CD8-positive, alpha-beta T cell (primary cell): ENCODE measurements at regions of chr19 and their contacts with region 1.

Region 1: DNA sequence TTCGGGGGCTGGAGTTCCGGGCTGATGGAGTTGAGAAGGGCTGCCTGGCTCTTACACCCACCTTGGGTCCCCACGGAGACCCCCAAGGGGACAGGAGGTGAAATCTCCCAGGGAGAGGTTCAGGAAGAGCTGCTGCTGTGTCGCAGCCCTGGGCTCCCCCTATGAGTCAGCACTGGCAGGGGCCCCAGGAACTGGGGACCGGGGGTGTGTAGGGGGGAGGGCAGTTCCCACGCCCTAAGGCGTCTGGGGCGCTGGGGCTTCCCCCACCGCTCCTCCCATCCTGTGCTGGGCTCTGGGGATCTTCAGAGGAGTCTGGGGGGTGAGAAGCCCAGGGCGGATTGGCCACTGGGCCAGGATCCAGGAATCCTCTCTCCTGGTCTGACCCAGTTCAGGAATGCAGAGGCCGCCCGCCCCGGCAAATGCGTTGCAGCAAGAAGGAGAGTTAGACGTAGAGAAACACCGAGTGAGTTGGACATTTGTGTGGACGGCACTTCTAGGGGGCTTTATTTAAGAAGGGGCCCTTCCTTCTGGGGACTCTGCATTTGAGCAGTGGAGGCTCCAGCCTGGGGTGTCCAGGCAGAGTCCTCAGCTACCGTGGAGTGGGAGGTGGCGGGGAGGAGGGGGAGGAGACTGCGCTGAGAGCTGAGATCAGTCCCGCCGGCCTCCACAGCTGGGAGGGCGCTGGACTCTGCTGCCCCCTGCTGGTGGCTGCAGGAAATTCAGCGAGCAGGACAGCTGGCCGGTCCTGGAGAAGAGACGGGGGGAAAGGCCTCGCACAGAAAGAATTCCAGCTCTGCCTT is 15.0 kb upstream of the NANOS3 start:
- DNase-seq: peak; percentile 81 to 95 (median 89)
- ATAC-seq: peak; percentile 84
- H3K4me3 ChIP-seq: peak overlapping the region; percentile 74 to 75
- H3K4me3 Mint-ChIP-seq: peak overlapping the region; percentile 92
- H3K27ac ChIP-seq: peak overlapping the region; percentile 71 to 98
- H3K27ac Mint-ChIP-seq: peak overlapping the region; percentile 96
- H3K4me1 ChIP-seq: peaks cover 31% of the 10 kb centered on the region
- H3K4me1 Mint-ChIP-seq: peaks cover 30% of the 10 kb centered on the region
- H3K27me3 ChIP-seq: peaks cover 7 to 21% of the 10 kb centered on the region in 2 experiments
- H3K27me3 Mint-ChIP-seq: peaks cover 16% of the 10 kb centered on the region
- CTCF ChIP-seq: peak; percentile 99

Region 2: DNA sequence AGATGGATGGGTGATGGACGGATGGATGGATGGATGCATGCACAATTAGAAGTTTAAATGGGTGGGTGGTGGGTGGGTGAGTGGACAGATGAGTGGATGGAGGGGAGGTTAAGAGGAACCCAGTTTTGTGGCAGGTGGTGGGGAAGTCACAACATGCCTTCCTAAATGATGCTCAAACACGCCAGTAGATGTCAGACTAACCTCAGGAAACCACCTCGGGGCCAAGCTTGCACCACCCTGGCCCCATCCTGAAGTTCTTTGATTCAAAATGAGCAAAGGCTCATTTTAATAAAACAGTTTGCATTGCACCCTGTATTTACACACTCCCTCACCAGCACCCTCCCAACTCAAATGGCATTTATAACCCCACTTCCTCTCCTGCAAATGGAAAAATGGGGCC is 264.3 kb before region 1 on chr19:
- CTCF ChIA-PET with region 1: interaction called, 6 read pairs
- POLR2A ChIA-PET with region 1: no interaction called
- intact Hi-C with region 1: loop called (anchors 1 kb)
- DNase-seq: peak in 8 of 9 experiments; percentile 9 to 75 (median 34)
- ATAC-seq: peak; percentile 76
- H3K4me3 ChIP-seq: no peak overlapping the region
- H3K4me3 Mint-ChIP-seq: no peak overlapping the region
- H3K27ac ChIP-seq: no peak overlapping the region
- H3K27ac Mint-ChIP-seq: no peak overlapping the region
- H3K4me1 ChIP-seq: no peaks in the 10 kb centered on the region
- H3K4me1 Mint-ChIP-seq: no peaks in the 10 kb centered on the region
- H3K27me3 ChIP-seq: no peaks in the 10 kb centered on the region
- H3K27me3 Mint-ChIP-seq: peaks cover 24% of the 10 kb centered on the region
- CTCF ChIP-seq: peak; percentile 44

Region 3: GRCh38 chr19:13774217-13775191 is 87.4 kb before region 1 on chr19 and contains the start of gene C19orf53:
- CTCF ChIA-PET with region 1: interaction called, 28 read pairs
- POLR2A ChIA-PET with region 1: interaction called, 13 read pairs
- intact Hi-C with region 1: no loop called
- DNase-seq: peak; percentile 66 to 94 (median 87)
- ATAC-seq: peak; percentile 96
- H3K4me3 ChIP-seq: peak within 1 kb of the TSS; percentile 89 to 91
- H3K4me3 Mint-ChIP-seq: peak within 1 kb of the TSS; percentile 99
- H3K27ac ChIP-seq: peak within 1 kb of the TSS; percentile 83 to 85
- H3K27ac Mint-ChIP-seq: peak within 1 kb of the TSS; percentile 97
- H3K4me1 ChIP-seq: peaks cover 17% of the 10 kb centered on the region
- H3K4me1 Mint-ChIP-seq: peaks cover 25% of the 10 kb centered on the region
- H3K27me3 ChIP-seq: no peaks in the 10 kb centered on the region
- H3K27me3 Mint-ChIP-seq: no peaks in the 10 kb centered on the region
- CTCF ChIP-seq: no peak
- total RNA-seq, gene C19orf53: 116 TPM

Region 4: GRCh38 chr19:13794757-13795589 is 67.0 kb before region 1 on chr19 and contains the start of gene ZSWIM4:
- CTCF ChIA-PET with region 1: interaction called, 263 read pairs
- POLR2A ChIA-PET with region 1: interaction called, 9 read pairs
- intact Hi-C with region 1: no loop called
- DNase-seq: peak; percentile 83 to 96 (median 91)
- ATAC-seq: peak; percentile 85
- H3K4me3 ChIP-seq: peak within 1 kb of the TSS; percentile 73 to 80
- H3K4me3 Mint-ChIP-seq: peak within 1 kb of the TSS; percentile 92
- H3K27ac ChIP-seq: peak within 1 kb of the TSS; percentile 51 to 77
- H3K27ac Mint-ChIP-seq: peak within 1 kb of the TSS; percentile 89
- H3K4me1 ChIP-seq: peaks cover 27% of the 10 kb centered on the region
- H3K4me1 Mint-ChIP-seq: peaks cover 38% of the 10 kb centered on the region
- H3K27me3 ChIP-seq: no peaks in the 10 kb centered on the region
- H3K27me3 Mint-ChIP-seq: no peaks in the 10 kb centered on the region
- CTCF ChIP-seq: no peak
- total RNA-seq, gene ZSWIM4: 4.1 to 5.0 TPM

Region 5: DNA sequence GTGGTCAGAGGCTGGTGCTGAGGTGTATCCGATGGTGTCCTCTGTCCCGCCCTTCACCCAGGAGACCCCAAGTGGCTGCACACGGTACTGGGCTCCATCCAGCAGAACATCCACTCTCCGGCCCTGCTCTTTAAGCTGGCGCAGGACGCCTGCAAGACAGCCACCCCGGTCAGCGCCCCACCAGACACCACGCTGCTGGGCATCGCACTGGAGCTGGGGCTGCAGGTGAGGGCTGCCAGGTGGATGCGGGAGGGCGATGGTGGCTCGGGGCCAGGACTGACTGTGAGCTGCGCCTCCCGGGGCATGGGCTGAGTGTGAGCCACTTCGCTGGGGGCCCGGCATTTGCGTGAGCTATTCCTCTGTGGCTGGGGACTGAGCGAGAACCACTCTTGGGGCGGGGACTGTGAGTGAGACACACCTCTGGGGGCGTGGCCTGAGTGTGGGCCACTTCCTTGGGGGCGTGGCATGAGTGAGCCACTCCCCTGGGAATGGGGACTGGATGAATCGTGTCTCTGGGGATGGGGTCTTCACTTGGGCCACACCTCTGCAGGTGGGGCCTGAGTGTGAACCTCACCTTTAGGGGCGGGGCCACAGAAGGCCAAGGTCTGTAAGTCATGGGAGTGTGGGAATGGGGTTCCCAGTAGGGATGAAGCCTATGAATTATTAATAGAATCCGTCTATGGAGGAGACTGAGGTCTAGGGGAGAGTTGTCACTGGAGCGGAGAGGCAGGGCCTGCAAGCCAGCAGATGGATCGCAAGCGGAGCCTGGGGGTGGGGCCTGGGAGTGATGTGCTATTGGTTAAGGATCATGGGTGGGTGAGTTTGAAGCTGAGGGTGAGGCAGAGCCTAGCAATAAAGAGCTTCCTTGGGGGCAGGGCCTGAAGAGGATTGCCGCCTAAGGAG is 36.2 kb before region 1 on chr19:
- CTCF ChIA-PET with region 1: interaction called, 6 read pairs
- POLR2A ChIA-PET with region 1: no interaction called
- intact Hi-C with region 1: loop called in 1 of 2 experiments (anchors 5 kb)
- DNase-seq: peak in 4 of 9 experiments; percentile 12 to 59 (median 38)
- ATAC-seq: no peak
- H3K4me3 ChIP-seq: no peak overlapping the region
- H3K4me3 Mint-ChIP-seq: no peak overlapping the region
- H3K27ac ChIP-seq: no peak overlapping the region
- H3K27ac Mint-ChIP-seq: peak overlapping the region; percentile 41
- H3K4me1 ChIP-seq: no peaks in the 10 kb centered on the region
- H3K4me1 Mint-ChIP-seq: peaks cover 3% of the 10 kb centered on the region
- H3K27me3 ChIP-seq: no peaks in the 10 kb centered on the region
- H3K27me3 Mint-ChIP-seq: no peaks in the 10 kb centered on the region
- CTCF ChIP-seq: no peak

Region 6: GRCh38 chr19:13839130-13839937 is 22.6 kb before region 1 on chr19:
- CTCF ChIA-PET with region 1: interaction called, 33 read pairs
- POLR2A ChIA-PET with region 1: interaction called, 14 read pairs
- intact Hi-C with region 1: loop called (anchors 2 kb)
- DNase-seq: peak in 8 of 9 experiments; percentile 64 to 89 (median 80)
- ATAC-seq: peak; percentile 45
- H3K4me3 ChIP-seq: peak overlapping the region; percentile 62 to 67
- H3K4me3 Mint-ChIP-seq: peak overlapping the region; percentile 88
- H3K27ac ChIP-seq: peak overlapping the region; percentile 78 to 96
- H3K27ac Mint-ChIP-seq: peak overlapping the region; percentile 95
- H3K4me1 ChIP-seq: peaks cover 82% of the 10 kb centered on the region
- H3K4me1 Mint-ChIP-seq: peaks cover 69% of the 10 kb centered on the region
- H3K27me3 ChIP-seq: no peaks in the 10 kb centered on the region
- H3K27me3 Mint-ChIP-seq: no peaks in the 10 kb centered on the region
- CTCF ChIP-seq: no peak

Region 7: GRCh38 chr19:13872695-13873389 is 10.9 kb after region 1 on chr19:
- CTCF ChIA-PET with region 1: interaction called, 14 read pairs
- POLR2A ChIA-PET with region 1: no interaction called
- intact Hi-C with region 1: no loop called
- DNase-seq: peak in 5 of 9 experiments; percentile 41 to 70 (median 60)
- ATAC-seq: peak; percentile 96
- H3K4me3 ChIP-seq: peak overlapping the region; percentile 21 to 30
- H3K4me3 Mint-ChIP-seq: peak overlapping the region; percentile 76
- H3K27ac ChIP-seq: no peak overlapping the region
- H3K27ac Mint-ChIP-seq: no peak overlapping the region
- H3K4me1 ChIP-seq: peaks cover 7% of the 10 kb centered on the region
- H3K4me1 Mint-ChIP-seq: peaks cover 9% of the 10 kb centered on the region
- H3K27me3 ChIP-seq: peaks cover 0 to 8% of the 10 kb centered on the region in 2 experiments
- H3K27me3 Mint-ChIP-seq: peaks cover 9% of the 10 kb centered on the region
- CTCF ChIP-seq: peak; percentile 13

Region 8: GRCh38 chr19:13909430-13909829 is 47.5 kb after region 1 on chr19:
- CTCF ChIA-PET with region 1: no interaction called
- POLR2A ChIA-PET with region 1: no interaction called
- intact Hi-C with region 1: no loop called
- DNase-seq: no peak
- ATAC-seq: no peak
- H3K4me3 ChIP-seq: no peak overlapping the region
- H3K4me3 Mint-ChIP-seq: no peak overlapping the region
- H3K27ac ChIP-seq: no peak overlapping the region
- H3K27ac Mint-ChIP-seq: no peak overlapping the region
- H3K4me1 ChIP-seq: peaks cover 12% of the 10 kb centered on the region
- H3K4me1 Mint-ChIP-seq: peaks cover 14% of the 10 kb centered on the region
- H3K27me3 ChIP-seq: no peaks in the 10 kb centered on the region
- H3K27me3 Mint-ChIP-seq: no peaks in the 10 kb centered on the region
- CTCF ChIP-seq: no peak